H1 (cell line): ENCODE measurements at regions of chr1 and their contacts with region 1.

Region 1: GRCh38 chr1:223700942-223701637 is 11.2 kb upstream of the CAPN2 start:
- DNase-seq: no peak
- H3K4me3 ChIP-seq: no peak overlapping the region
- H3K27ac ChIP-seq: no peak overlapping the region
- H3K4me1 ChIP-seq: peaks cover 0 to 2% (median 0%) of the 10 kb centered on the region in 4 experiments; a peak in 2 of 7 replicates
- H3K27me3 ChIP-seq: no peaks in the 10 kb centered on the region
- CTCF ChIP-seq: no peak
- EP300 ChIP-seq: no peak
- POLR2A ChIP-seq: no peak
- RAD21 ChIP-seq: no peak

Region 2: GRCh38 chr1:223538981-223539380 is 162.1 kb before region 1 on chr1:
- CTCF ChIA-PET with region 1: no interaction called
- POLR2A ChIA-PET with region 1: no interaction called
- DNase-seq: no peak
- H3K4me3 ChIP-seq: no peak overlapping the region
- H3K27ac ChIP-seq: no peak overlapping the region
- H3K4me1 ChIP-seq: peaks cover 0 to 3% (median 0%) of the 10 kb centered on the region in 4 experiments; a peak in 1 of 7 replicates
- H3K27me3 ChIP-seq: no peaks in the 10 kb centered on the region
- CTCF ChIP-seq: no peak
- EP300 ChIP-seq: no peak
- POLR2A ChIP-seq: no peak
- RAD21 ChIP-seq: no peak

Region 3: GRCh38 chr1:223712194-223712849 is 11.2 kb after region 1 on chr1 and contains the start of gene CAPN2:
- CTCF ChIA-PET with region 1: interaction called, 28 read pairs
- POLR2A ChIA-PET with region 1: interaction called, 3 read pairs
- DNase-seq: peak in 1 of 2 experiments; percentile 83
- H3K4me3 ChIP-seq: peak within 1 kb of the TSS; percentile 58 to 76 (median 62)
- H3K27ac ChIP-seq: no peak within 1 kb of the TSS; the same call in 1 of the 2 replicates
- H3K4me1 ChIP-seq: peaks cover 3 to 10% (median 7%) of the 10 kb centered on the region in 4 experiments
- H3K27me3 ChIP-seq: peaks cover 0 to 50% (median 38%) of the 10 kb centered on the region in 4 experiments; a peak in 6 of 7 replicates
- CTCF ChIP-seq: peak; percentile 67 to 85 (median 68)
- EP300 ChIP-seq: no peak
- POLR2A ChIP-seq: peak in 1 of 2 experiments; percentile 30; a peak in 1 of 3 replicates
- RAD21 ChIP-seq: peak; percentile 68 to 88
- total RNA-seq, gene CAPN2: 9.2 and 9.4 TPM in 2 replicates

Region 4: DNA sequence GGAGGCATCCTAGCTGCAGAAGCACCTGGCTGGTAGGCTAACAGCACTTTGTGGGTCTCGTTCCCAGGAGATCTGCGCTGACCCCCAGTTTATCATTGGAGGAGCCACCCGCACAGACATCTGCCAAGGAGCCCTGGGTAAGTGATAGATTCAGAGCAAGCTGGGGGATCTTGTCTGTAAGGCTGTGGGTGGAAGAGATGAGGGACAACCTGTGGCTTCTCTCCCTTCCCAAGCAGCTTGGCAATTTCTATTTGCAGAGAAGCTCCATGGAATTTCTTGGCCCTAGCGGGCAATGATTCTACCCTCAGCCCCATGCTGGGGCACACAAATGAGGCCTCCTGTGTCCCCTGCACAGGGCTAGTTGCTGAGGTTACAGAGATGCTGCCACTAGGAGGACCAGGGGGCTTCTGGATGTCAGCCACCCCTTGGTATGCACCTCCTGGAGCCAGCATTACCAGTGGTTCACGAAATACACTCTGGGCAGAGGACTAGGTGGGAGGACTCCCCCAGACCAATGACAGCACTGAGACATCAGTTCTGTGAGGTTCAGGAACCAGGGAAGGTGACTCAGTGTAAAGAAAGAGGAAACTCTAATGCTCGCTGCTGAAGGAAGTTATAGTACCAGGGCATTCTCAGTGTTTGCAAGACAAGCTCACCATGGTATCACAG is 16.7 kb after region 1 on chr1:
- CTCF ChIA-PET with region 1: interaction called, 24 read pairs
- POLR2A ChIA-PET with region 1: interaction called, 3 read pairs
- DNase-seq: no peak
- H3K4me3 ChIP-seq: no peak overlapping the region
- H3K27ac ChIP-seq: no peak overlapping the region
- H3K4me1 ChIP-seq: peaks cover 4 to 26% (median 16%) of the 10 kb centered on the region in 4 experiments; a peak in 6 of 7 replicates
- H3K27me3 ChIP-seq: peaks cover 0 to 73% (median 70%) of the 10 kb centered on the region in 4 experiments; a peak in 6 of 7 replicates
- CTCF ChIP-seq: no peak
- EP300 ChIP-seq: no peak
- POLR2A ChIP-seq: no peak
- RAD21 ChIP-seq: no peak; a peak in 1 of 4 replicates

Region 5: GRCh38 chr1:223831755-223832636 is 130.9 kb after region 1 on chr1:
- CTCF ChIA-PET with region 1: no interaction called
- POLR2A ChIA-PET with region 1: no interaction called
- DNase-seq: no peak
- H3K4me3 ChIP-seq: no peak overlapping the region
- H3K27ac ChIP-seq: no peak overlapping the region
- H3K4me1 ChIP-seq: peaks cover 0 to 4% (median 3%) of the 10 kb centered on the region in 4 experiments; a peak in 6 of 7 replicates
- H3K27me3 ChIP-seq: no peaks in the 10 kb centered on the region
- CTCF ChIP-seq: no peak
- EP300 ChIP-seq: no peak
- POLR2A ChIP-seq: no peak
- RAD21 ChIP-seq: no peak